ENCODE measurements at regions of chr10 and their contacts with region 1.

Region 1: DNA sequence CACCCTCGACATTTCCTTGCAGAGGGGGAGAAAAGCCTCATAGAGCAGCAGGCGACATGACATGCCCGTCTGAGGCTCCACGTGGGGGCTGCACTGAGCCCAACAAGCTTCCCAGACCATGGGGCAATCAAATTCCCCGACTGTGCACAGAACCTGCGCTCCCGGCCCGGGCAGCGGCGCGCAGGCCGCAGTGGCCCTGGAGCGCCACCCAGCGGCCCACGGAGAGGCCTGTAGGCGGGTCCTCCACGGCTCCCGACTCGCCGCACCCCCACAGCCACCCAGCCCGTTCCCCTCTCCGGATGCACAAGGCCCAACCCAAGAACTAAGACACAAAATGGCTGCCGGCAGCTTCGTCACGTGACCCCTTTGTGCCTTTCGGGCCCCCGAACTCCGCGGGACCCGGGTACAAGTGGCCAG is 816 bp downstream of the EPC1 start:
- H3K4me3 Mint-ChIP-seq: peak overlapping the region; percentile 90
- H3K27ac Mint-ChIP-seq: peak overlapping the region; percentile 100
- H3K4me1 Mint-ChIP-seq: peaks cover 34% of the 10 kb centered on the region
- H3K27me3 Mint-ChIP-seq: peaks cover 2% of the 10 kb centered on the region

Region 2: DNA sequence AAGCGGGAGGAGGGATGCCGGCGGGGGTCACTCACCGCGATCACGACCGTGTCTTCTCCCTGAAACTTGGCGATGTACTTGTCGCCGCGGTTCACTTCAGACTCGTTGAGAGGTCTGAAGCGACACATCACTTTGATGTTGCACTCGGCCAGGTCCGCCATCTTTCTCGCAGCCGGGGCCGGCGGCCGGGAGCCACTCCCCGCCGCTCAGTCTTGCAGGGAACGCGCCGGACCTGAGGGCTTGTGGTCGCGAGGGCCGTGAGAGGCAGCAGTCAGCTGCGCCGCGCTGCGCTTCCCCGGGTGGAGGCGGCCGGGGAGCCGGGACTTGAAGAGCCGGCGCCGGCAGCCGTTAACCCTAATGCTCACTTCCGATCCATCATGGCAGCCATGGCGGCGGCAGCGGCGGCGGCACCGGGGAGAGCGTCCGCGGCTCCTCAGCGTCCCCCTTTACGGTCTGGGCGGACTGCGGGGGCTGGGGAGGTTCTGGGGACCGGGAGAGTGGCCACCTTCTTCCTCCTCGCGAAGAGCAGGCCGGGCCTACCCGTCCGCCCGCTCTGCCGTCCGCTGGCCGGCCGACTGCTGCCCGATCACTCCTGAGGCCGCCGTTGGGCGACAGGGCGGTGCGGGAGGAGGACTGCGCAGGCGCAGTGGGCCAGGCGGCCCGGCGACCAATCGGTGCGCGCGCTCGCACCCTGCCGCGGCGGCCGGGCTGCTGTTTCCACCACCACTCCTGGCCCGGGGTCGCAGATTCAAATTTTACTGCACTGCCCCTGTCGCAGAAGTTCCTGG is 290.1 kb before region 1 on chr10 and contains the start of gene KIF5B:
- intact Hi-C with region 1: loop called (anchors 10 kb)
- H3K4me3 Mint-ChIP-seq: peak within 1 kb of the TSS; percentile 98
- H3K27ac Mint-ChIP-seq: peak within 1 kb of the TSS; percentile 93
- H3K4me1 Mint-ChIP-seq: peaks cover 54% of the 10 kb centered on the region
- H3K27me3 Mint-ChIP-seq: no peaks in the 10 kb centered on the region

Region 3: GRCh38 chr10:32190890-32191491 is 155.2 kb before region 1 on chr10:
- intact Hi-C with region 1: loop called (anchors 10 kb)
- H3K4me3 Mint-ChIP-seq: no peak overlapping the region
- H3K27ac Mint-ChIP-seq: no peak overlapping the region
- H3K4me1 Mint-ChIP-seq: peaks cover 25% of the 10 kb centered on the region
- H3K27me3 Mint-ChIP-seq: peaks cover 5% of the 10 kb centered on the region

Region 4: DNA sequence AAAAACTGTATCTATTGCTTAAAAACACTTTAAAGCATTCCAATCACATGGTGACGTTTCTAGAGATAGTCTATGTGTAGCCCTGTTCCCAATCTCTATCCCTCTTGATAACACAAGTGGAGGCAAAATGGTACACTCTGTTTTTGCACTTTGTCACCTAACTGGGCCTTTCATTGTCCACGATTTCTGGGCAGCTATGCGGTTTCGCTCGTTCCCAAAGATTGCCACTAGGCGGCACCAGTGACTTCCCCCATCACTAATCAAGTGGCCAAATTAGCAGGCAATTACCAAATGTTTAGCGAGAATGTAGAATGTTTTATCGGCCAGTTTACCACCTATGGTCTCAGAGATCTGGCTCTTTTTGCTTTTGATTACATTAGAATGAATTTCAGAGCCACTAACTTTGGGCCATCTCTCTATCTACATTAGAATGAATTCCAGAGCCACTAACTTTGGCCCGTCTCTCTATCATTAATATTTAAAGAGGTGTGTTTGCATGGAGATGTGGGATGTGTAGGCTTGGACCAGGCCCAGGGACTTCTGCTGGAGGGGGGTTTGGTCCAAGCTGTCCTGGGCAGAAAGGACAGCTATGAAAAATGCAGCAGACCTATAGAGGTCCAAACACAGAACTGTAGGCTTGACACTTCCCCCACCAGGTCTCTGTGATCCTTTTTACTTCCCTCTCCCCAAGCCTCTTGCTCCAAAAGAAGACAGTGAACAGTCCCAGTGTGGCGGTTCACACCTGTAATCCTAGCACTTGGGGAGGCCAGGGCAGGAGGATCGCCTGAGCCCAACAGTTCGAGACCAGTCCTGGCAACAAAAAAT is 89.3 kb before region 1 on chr10:
- intact Hi-C with region 1: loop called (anchors 1 kb)
- H3K4me3 Mint-ChIP-seq: no peak overlapping the region
- H3K27ac Mint-ChIP-seq: no peak overlapping the region
- H3K4me1 Mint-ChIP-seq: peaks cover 20% of the 10 kb centered on the region
- H3K27me3 Mint-ChIP-seq: no peaks in the 10 kb centered on the region

Region 5: GRCh38 chr10:32271617-32272016 is 74.5 kb before region 1 on chr10:
- intact Hi-C with region 1: loop called (anchors 5 kb)
- H3K4me3 Mint-ChIP-seq: no peak overlapping the region
- H3K27ac Mint-ChIP-seq: no peak overlapping the region
- H3K4me1 Mint-ChIP-seq: peaks cover 8% of the 10 kb centered on the region
- H3K27me3 Mint-ChIP-seq: no peaks in the 10 kb centered on the region

Region 6: GRCh38 chr10:32367793-32368453 is 21.8 kb after region 1 on chr10:
- intact Hi-C with region 1: loop called (anchors 2 kb)
- H3K4me3 Mint-ChIP-seq: no peak overlapping the region
- H3K27ac Mint-ChIP-seq: no peak overlapping the region
- H3K4me1 Mint-ChIP-seq: peaks cover 23% of the 10 kb centered on the region
- H3K27me3 Mint-ChIP-seq: no peaks in the 10 kb centered on the region

Region 7: GRCh38 chr10:32459051-32459698 is 113.0 kb after region 1 on chr10:
- intact Hi-C with region 1: no loop called
- H3K4me3 Mint-ChIP-seq: no peak overlapping the region
- H3K27ac Mint-ChIP-seq: no peak overlapping the region
- H3K4me1 Mint-ChIP-seq: no peaks in the 10 kb centered on the region
- H3K27me3 Mint-ChIP-seq: no peaks in the 10 kb centered on the region

Measured in dendritic cell treated with granulocyte-macrophage colony-stimulating factor and Interleukin-4, amounts not matched to agents 40 ng/mL and 50 ng/mL, for 4 days (primary cell).